Dendritic cell treated with granulocyte-macrophage colony-stimulating factor and Interleukin-4, amounts not matched to agents 40 ng/mL and 50 ng/mL, for 4 days (primary cell): ENCODE measurements at regions of chr19 and their contacts with region 1.

Region 1: DNA sequence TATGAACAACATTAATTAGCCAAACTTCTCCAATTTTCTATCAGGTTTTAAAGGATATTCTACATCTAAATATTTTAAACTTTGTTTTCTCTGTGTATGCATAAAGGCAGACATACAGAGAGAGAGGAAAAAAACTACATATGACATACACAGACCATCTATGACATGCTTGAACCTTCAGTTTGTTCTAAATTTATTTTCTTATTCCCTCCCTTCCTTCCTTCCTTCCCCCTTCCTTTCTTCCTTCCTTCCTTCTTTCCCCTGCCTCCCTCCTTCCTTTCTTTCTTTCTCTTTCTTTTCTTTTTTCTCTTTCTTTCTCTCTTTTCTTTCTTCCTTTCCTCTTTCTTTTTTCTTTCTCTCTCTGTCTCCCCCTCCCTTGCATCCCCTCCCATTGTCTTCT is 35.8 kb upstream of the CD70 start:
- H3K4me3 Mint-ChIP-seq: no peak overlapping the region
- H3K27ac Mint-ChIP-seq: no peak overlapping the region
- H3K4me1 Mint-ChIP-seq: peaks cover 12% of the 10 kb centered on the region
- H3K27me3 Mint-ChIP-seq: peaks cover 66% of the 10 kb centered on the region

Region 2: DNA sequence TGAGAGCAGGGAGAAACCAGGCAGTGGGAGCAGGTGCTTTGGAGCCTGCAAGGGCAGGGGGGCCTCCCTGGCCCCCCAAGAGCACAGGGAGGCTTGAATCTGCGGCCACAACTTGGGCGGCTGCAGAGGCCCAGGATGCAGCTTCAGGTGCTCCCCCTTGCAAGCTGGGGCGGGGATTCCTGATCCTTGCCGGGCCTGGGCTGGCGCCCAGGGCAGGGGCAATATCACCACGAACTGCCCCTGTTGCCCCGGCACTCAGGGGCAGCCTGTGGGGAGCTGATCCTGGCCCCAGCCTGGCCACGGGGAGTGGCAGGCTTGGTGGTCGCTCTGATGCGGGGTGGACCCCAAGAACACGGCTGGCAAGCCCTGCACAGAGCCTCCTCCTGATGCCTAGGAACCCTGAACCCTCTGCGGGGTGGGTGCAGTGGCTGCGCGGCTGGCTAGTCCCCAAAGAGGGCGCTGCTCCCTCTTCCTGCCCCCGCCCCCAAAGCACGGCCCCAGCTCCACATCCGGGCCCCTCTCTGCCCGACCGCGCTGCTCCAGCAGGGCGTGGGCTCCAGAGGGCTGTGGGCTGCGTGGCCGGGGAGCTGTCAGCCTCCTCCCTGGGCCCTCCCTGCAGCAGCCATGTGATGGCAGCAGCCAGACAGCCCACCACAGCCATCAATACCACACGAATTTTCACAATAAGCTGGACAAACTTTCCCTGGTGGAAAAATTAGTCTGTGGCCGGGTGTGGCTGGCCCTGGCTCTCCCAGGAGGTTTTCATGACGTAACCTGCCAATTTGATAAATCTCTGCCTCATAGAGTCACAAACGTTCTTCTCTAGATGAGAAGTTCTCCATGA is 74.9 kb before region 1 on chr19:
- intact Hi-C with region 1: loop called (anchors 10 kb)
- H3K4me3 Mint-ChIP-seq: no peak overlapping the region
- H3K27ac Mint-ChIP-seq: no peak overlapping the region
- H3K4me1 Mint-ChIP-seq: peaks cover 6% of the 10 kb centered on the region
- H3K27me3 Mint-ChIP-seq: peaks cover 37% of the 10 kb centered on the region